ENCODE measurements at regions of chr1 and their contacts with region 1.

Region 1: GRCh38 chr1:204941421-204942338 is 71.0 kb downstream of the NFASC start:
- DNase-seq: peak; percentile 53 to 92
- H3K4me3 ChIP-seq: no peak overlapping the region
- H3K27ac ChIP-seq: no peak overlapping the region
- H3K4me1 ChIP-seq: peaks cover 0 to 3% (median 2%) of the 10 kb centered on the region in 4 experiments; a peak in 2 of 7 replicates
- H3K27me3 ChIP-seq: no peaks in the 10 kb centered on the region; a peak in 1 of 7 replicates
- CTCF ChIP-seq: peak; percentile 78 to 94 (median 93)
- EP300 ChIP-seq: no peak
- POLR2A ChIP-seq: no peak
- RAD21 ChIP-seq: peak; percentile 83 to 88

Region 2: GRCh38 chr1:204828338-204828850 is 113.3 kb before region 1 on chr1:
- CTCF ChIA-PET with region 1: interaction called, 278 read pairs
- POLR2A ChIA-PET with region 1: interaction called, 4 read pairs
- DNase-seq: peak; percentile 43 to 93
- H3K4me3 ChIP-seq: peak overlapping the region; percentile 47 to 66 (median 55)
- H3K27ac ChIP-seq: no peak overlapping the region
- H3K4me1 ChIP-seq: peaks cover 3 to 10% (median 8%) of the 10 kb centered on the region in 4 experiments; a peak in 6 of 7 replicates
- H3K27me3 ChIP-seq: peaks cover 0 to 8% (median 3%) of the 10 kb centered on the region in 4 experiments; a peak in 4 of 7 replicates
- CTCF ChIP-seq: peak in 2 of 3 experiments; percentile 19 to 35; a peak in 3 of 4 replicates
- EP300 ChIP-seq: no peak
- POLR2A ChIP-seq: no peak
- RAD21 ChIP-seq: peak in 1 of 2 experiments; percentile 32; a peak in 1 of 4 replicates

Region 3: DNA sequence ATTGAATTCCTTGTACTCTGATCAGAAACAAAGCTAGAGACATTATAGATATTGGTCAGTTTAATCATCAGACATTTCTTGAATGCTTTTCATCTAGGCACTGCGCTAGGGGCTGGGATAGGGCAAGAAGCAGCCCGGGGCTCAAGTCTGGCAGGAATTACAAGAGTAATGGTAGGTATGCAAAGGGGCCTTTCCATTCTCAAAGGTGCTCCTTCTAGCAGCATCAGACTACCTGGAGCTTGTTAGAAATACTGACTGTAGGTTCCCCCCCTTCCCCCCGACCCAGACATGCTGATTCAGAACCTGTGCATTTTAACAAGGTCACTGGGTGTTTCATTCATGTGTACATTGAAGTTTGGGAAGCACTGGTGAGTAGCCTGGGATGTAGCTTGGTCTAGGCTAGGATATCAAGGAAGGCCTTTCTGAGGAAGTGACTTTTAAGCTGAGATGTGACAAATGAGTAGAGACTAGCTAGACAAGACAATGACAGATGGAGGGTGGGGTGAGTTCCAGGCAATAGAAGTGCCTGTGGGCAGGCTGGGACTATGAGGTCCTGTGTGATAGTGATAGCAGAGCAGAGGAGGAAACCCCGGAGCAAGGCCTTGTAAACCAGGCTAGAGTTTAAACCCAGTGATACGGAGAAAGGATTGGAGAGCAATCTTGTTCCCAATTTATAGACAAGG is 44.8 kb before region 1 on chr1:
- CTCF ChIA-PET with region 1: interaction called, 10 read pairs
- POLR2A ChIA-PET with region 1: no interaction called
- DNase-seq: no peak
- H3K4me3 ChIP-seq: no peak overlapping the region
- H3K27ac ChIP-seq: no peak overlapping the region
- H3K4me1 ChIP-seq: peaks cover 0 to 5% (median under 1%) of the 10 kb centered on the region in 4 experiments; a peak in 1 of 7 replicates
- H3K27me3 ChIP-seq: no peaks in the 10 kb centered on the region
- CTCF ChIP-seq: no peak
- EP300 ChIP-seq: no peak
- POLR2A ChIP-seq: no peak
- RAD21 ChIP-seq: no peak

Region 4: GRCh38 chr1:204961765-204962419 is 20.2 kb after region 1 on chr1:
- CTCF ChIA-PET with region 1: interaction called, 20 read pairs
- POLR2A ChIA-PET with region 1: interaction called, 3 read pairs
- DNase-seq: no peak
- H3K4me3 ChIP-seq: no peak overlapping the region
- H3K27ac ChIP-seq: no peak overlapping the region
- H3K4me1 ChIP-seq: peaks cover 0 to 4% (median 2%) of the 10 kb centered on the region in 4 experiments; a peak in 4 of 7 replicates
- H3K27me3 ChIP-seq: no peaks in the 10 kb centered on the region
- CTCF ChIP-seq: peak in 2 of 3 experiments; percentile 40 to 47; a peak in 3 of 4 replicates
- EP300 ChIP-seq: no peak
- POLR2A ChIP-seq: no peak
- RAD21 ChIP-seq: peak; percentile 65 to 73

Region 5: GRCh38 chr1:204975570-204976235 is 34.0 kb after region 1 on chr1:
- CTCF ChIA-PET with region 1: interaction called, 19 read pairs
- POLR2A ChIA-PET with region 1: no interaction called
- DNase-seq: peak; percentile 23 to 88
- H3K4me3 ChIP-seq: no peak overlapping the region
- H3K27ac ChIP-seq: no peak overlapping the region
- H3K4me1 ChIP-seq: no peaks in the 10 kb centered on the region
- H3K27me3 ChIP-seq: no peaks in the 10 kb centered on the region
- CTCF ChIP-seq: peak; percentile 77 to 82 (median 80)
- EP300 ChIP-seq: no peak
- POLR2A ChIP-seq: no peak
- RAD21 ChIP-seq: peak; percentile 84 to 86

Measured in H1 (cell line).